ENCODE measurements at regions of chr11 and their contacts with region 1.

Region 1: DNA sequence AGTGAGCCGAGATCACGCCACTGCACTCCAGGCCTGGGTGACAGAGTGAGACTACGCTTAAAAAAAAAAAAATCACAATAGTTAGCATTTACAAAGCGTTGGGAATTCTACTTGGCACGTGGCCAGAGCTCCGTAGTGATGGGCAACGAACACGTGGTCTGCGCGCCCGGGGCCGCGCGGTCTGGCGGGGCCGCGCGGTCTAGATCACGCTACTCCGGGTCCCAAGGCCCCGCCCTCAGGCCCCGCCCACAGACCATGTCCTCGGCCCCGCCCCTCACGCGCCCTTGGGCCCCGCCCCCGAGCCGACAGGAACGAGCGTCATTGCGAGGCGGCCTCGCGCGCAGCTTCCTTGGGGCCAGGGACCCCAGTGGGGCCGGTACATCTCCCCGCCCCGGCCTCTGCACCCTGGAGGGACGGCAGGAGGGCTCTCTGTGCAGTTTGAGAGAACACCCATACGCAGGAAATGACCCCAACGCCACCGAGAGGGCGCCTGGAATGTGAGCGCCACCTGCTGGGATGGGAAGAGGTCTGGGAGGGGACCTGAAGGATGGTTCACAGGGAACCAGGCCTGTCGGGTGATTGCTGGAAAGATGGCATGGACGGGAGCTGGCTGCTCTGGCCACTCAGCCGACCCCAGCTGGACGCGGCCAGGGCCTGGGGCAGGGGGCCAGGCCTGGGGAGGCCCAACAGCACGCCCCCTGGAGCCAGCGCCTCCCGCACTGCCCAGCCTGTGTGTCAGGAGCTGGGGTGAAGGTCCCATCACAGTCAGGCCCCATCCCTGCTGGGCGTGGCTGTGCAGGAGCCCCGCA is 2.0 kb upstream of the PTDSS2 start:
- DNase-seq: peak; percentile 99
- H3K4me3 ChIP-seq: peak overlapping the region; percentile 63 to 72 (median 70)
- H3K27ac ChIP-seq: peak overlapping the region; percentile 86 to 97 (median 92)
- H3K4me1 ChIP-seq: peaks cover 28 to 50% (median 42%) of the 10 kb centered on the region in 4 donors
- H3K27me3 ChIP-seq: peaks cover 0 to 14% (median 3%) of the 10 kb centered on the region in 4 donors
- CTCF ChIP-seq: peak; percentile 83 to 91 (median 85)
- EP300 ChIP-seq: no peak
- POLR2A ChIP-seq: peak; percentile 80

Region 2: DNA sequence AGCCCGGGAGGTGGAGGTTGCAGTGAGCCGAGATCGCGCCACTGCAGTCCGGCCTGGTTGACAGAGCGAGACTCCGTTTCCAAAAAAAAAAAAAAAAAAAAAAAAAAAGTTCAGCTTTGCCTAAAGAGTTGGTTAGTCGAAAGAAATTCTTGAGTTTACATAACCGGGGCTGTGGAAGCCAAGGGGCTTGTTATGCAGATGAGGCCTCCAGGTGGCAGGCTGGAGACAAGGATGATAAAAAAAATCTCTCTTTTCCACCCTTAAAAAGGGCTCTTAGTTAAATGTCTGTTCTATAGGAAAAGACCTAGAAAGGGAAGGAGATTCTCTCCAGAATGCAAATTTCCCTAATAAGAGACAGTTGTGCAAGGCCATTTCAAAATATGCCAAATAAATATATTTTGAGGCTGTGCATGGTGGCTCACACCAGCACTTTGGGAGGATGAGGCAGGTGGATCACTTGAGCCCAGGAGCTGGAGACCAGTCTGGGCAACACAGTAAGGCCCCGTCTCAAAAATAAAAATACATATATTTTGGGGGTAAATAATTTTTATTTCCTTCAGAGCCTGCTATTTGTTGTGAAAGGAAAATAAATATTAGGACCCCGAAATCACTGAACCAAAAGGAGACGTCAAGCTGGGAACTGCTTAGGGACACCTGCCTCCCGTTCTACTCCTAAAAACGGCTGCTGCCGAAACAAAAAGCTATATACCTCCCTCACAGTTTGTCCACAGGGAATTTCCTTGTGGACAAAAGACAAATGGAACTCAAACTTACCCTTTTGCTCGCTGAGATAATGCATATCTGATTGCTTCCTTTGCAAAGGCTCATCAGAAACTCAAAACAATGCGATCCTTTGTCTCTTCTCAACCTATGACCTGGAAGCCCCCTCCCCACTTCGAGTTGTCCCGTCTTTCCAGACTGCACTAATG is 142.9 kb before region 1 on chr11:
- intact Hi-C with region 1: loop called (anchors 5 kb)
- DNase-seq: no peak
- H3K4me3 ChIP-seq: no peak overlapping the region
- H3K27ac ChIP-seq: peak overlapping the region in 3 of 4 donors; percentile 31 to 90 (median 36)
- H3K4me1 ChIP-seq: peaks cover 25 to 46% (median 35%) of the 10 kb centered on the region in 4 donors
- H3K27me3 ChIP-seq: peaks cover 0 to 15% (median 2%) of the 10 kb centered on the region in 4 donors
- CTCF ChIP-seq: peak; percentile 72 to 88 (median 73)
- EP300 ChIP-seq: no peak
- POLR2A ChIP-seq: no peak

Region 3: GRCh38 chr11:406978-407739 is 41.0 kb before region 1 on chr11:
- intact Hi-C with region 1: loop called (anchors 2 kb)
- DNase-seq: peak; percentile 95
- H3K4me3 ChIP-seq: peak overlapping the region; percentile 62 to 86 (median 71)
- H3K27ac ChIP-seq: peak overlapping the region; percentile 69 to 79 (median 74)
- H3K4me1 ChIP-seq: peaks cover 16 to 26% (median 24%) of the 10 kb centered on the region in 4 donors
- H3K27me3 ChIP-seq: peaks cover 0 to 17% (median 3%) of the 10 kb centered on the region in 4 donors
- CTCF ChIP-seq: no peak
- EP300 ChIP-seq: no peak
- POLR2A ChIP-seq: no peak

Region 4: GRCh38 chr11:503179-503981 is 55.3 kb after region 1 on chr11:
- intact Hi-C with region 1: loop called (anchors 5 kb)
- DNase-seq: no peak
- H3K4me3 ChIP-seq: peak overlapping the region; percentile 64 to 93 (median 66)
- H3K27ac ChIP-seq: peak overlapping the region; percentile 77 to 100 (median 78)
- H3K4me1 ChIP-seq: peaks cover 56 to 59% (median 58%) of the 10 kb centered on the region in 4 donors
- H3K27me3 ChIP-seq: no peaks in the 10 kb centered on the region
- CTCF ChIP-seq: no peak
- EP300 ChIP-seq: no peak
- POLR2A ChIP-seq: no peak

Region 5: DNA sequence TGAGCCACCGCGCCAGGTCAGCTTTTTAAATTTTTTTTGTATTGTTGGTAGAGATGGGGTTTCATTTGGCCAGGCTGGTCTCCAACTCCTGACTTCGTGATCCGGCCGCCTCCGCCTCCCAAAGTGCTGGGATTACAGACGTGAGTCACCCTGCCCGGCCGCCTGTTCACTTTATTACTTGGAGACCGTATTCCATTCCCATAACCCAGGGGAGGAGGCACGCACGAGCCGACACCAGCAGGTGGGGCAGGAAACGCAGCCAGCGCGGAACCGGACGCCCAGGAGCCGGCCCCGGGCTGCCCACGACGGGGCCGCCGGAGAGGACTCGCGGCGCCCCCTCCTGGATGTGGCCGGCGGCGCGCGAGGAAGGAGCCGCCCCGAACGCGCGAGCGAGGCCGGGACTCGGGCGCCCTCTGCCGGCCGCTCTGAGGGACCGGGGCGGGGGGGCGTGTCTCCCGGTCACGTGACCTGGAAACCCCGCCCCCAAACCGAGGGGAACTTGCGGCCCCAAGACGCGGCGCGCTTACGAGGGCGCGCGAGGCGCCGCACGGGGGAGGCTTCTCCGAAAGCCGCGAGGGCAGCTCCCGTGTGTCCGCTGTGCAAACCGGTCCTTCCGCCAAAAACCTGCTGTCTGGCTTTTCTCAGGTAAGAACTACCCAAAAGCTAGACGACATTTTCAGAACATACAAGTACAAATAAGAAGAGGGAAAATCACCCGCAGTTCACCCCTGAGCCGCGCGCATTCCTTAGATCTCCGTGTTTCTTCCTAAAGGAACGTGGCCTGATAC is 70.5 kb after region 1 on chr11:
- intact Hi-C with region 1: loop called (anchors 5 kb)
- DNase-seq: peak; percentile 96
- H3K4me3 ChIP-seq: peak overlapping the region; percentile 23 to 53 (median 38)
- H3K27ac ChIP-seq: peak overlapping the region; percentile 79 to 91 (median 88)
- H3K4me1 ChIP-seq: peaks cover 5 to 13% (median 9%) of the 10 kb centered on the region in 4 donors
- H3K27me3 ChIP-seq: no peaks in the 10 kb centered on the region
- CTCF ChIP-seq: peak in 2 of 3 experiments; percentile 100
- EP300 ChIP-seq: no peak
- POLR2A ChIP-seq: no peak

Measured in esophagus muscularis mucosa (tissue), 4 donors.